Stomach (tissue), 19 donors: ENCODE measurements at regions of chr3 and their contacts with region 1.

Region 1: GRCh38 chr3:142993958-142994442 is 7.4 kb upstream of the U2SURP start:
- DNase-seq: peak; percentile 52 to 89
- H3K4me3 ChIP-seq: no peak overlapping the region
- H3K27ac ChIP-seq: no peak overlapping the region
- H3K4me1 ChIP-seq: no peaks in the 10 kb centered on the region
- H3K27me3 ChIP-seq: no peaks in the 10 kb centered on the region
- CTCF ChIP-seq: peak in 5 of 7 experiments; percentile 22 to 64 (median 41)
- EP300 ChIP-seq: no peak
- POLR2A ChIP-seq: no peak

Region 2: DNA sequence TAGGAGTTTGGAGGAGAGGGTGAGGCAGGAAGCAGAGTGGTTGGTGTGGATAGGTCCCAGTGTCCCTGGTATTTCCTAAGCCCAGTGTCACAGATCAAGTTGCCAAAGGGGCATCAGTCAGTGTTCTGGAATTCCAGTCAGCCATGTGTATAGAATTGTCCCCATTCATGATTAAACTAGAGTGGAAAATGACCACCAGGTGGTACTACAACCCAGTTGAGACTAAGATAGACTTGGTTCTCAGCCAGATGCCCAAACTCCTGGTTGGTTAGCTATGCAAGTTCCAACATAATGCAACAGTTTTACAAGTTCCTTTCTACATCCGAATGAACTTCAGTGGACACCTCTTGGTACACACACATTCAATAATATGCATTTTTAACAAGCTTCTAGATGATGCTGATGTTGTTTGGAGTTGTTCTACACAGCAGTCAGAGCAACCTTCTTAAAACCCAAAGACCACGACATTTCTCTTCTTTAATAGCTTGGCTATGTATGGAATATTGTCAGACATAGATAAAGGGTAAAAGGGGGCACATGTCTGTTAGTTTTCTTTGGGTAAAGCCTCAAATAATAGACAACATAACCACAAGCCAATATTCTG is 407.1 kb before region 1 on chr3:
- intact Hi-C with region 1: loop called (anchors 5 kb)
- DNase-seq: peak; percentile 41 to 87
- H3K4me3 ChIP-seq: no peak overlapping the region
- H3K27ac ChIP-seq: no peak overlapping the region
- H3K4me1 ChIP-seq: peaks cover 0 to 5% (median 2%) of the 10 kb centered on the region in 4 donors
- H3K27me3 ChIP-seq: peaks cover 0 to 8% (median 5%) of the 10 kb centered on the region in 3 donors
- CTCF ChIP-seq: peak in 4 of 7 experiments; percentile 49 to 79 (median 62)
- EP300 ChIP-seq: no peak
- POLR2A ChIP-seq: no peak

Region 3: GRCh38 chr3:143146486-143147274 is 152.7 kb after region 1 on chr3:
- intact Hi-C with region 1: no loop called
- DNase-seq: no peak
- H3K4me3 ChIP-seq: no peak overlapping the region
- H3K27ac ChIP-seq: no peak overlapping the region
- H3K4me1 ChIP-seq: no peaks in the 10 kb centered on the region
- H3K27me3 ChIP-seq: peaks cover 0 to 12% (median 0%) of the 10 kb centered on the region in 3 donors
- CTCF ChIP-seq: no peak
- EP300 ChIP-seq: no peak
- POLR2A ChIP-seq: no peak